B cell (primary cell): ENCODE measurements at regions of chr16 and their contacts with region 1.

Region 1: GRCh38 chr16:23640931-23641765 is at the starts of genes DCTN5 and PALB2:
- DNase-seq: peak; percentile 91
- ATAC-seq: peak; percentile 95
- H3K4me3 ChIP-seq: peak within 1 kb of the TSS; percentile 89 to 100 (median 96)
- H3K4me3 Mint-ChIP-seq: peak within 1 kb of the TSS; percentile 99
- H3K27ac ChIP-seq: peak within 1 kb of the TSS; percentile 80 to 84
- H3K27ac Mint-ChIP-seq: peak within 1 kb of the TSS; percentile 98
- H3K4me1 ChIP-seq: peaks cover 13 to 20% of the 10 kb centered on the region in 2 donors
- H3K4me1 Mint-ChIP-seq: peaks cover 36% of the 10 kb centered on the region
- H3K27me3 ChIP-seq: no peaks in the 10 kb centered on the region
- H3K27me3 Mint-ChIP-seq: no peaks in the 10 kb centered on the region
- CTCF ChIP-seq: no peak
- total RNA-seq, gene DCTN5: 58.3 and 62.3 TPM in 2 replicates
- total RNA-seq, gene PALB2: 14.9 and 16.3 TPM in 2 replicates

Region 2: DNA sequence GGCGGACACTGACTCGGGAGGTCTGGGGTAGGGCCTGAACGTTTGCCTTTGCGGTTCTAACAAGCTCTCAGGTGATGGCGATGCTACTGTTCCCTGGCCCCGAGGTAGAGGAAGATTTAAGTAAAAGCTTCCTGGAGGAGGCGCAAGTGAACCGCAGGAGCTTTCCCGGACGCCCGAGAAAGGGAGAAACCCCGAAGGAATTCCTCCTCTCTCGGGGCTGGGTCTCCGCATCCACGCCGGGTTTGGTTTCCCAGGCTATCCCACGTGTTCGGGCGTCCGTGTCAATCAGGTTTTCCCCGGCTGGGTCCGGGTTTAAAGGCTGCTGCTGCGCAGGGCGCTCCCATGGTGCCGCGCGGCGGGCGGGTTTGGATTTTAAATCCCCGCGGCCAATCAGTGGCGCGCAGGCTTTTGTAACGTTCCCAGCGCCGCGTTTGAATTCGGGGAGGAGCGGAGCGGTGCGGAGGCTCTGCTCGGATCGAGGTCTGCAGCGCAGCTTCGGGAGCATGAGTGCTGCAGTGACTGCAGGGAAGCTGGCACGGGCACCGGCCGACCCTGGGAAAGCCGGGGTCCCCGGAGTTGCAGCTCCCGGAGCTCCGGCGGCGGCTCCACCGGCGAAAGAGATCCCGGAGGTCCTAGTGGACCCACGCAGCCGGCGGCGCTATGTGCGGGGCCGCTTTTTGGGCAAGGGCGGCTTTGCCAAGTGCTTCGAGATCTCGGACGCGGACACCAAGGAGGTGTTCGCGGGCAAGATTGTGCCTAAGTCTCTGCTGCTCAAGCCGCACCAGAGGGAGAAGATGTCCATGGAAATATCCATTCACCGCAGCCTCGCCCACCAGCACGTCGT is 37.5 kb after region 1 on chr16 and contains the start of gene PLK1:
- CTCF ChIA-PET with region 1: interaction called, 3 read pairs
- POLR2A ChIA-PET with region 1: no interaction called
- intact Hi-C with region 1: loop called (anchors 1 kb)
- DNase-seq: peak; percentile 66
- ATAC-seq: peak; percentile 87
- H3K4me3 ChIP-seq: peak within 1 kb of the TSS; percentile 56 to 73 (median 64)
- H3K4me3 Mint-ChIP-seq: peak within 1 kb of the TSS; percentile 90
- H3K27ac ChIP-seq: no peak within 1 kb of the TSS
- H3K27ac Mint-ChIP-seq: no peak within 1 kb of the TSS
- H3K4me1 ChIP-seq: peaks cover 12 to 15% of the 10 kb centered on the region in 2 donors
- H3K4me1 Mint-ChIP-seq: peaks cover 17% of the 10 kb centered on the region
- H3K27me3 ChIP-seq: peaks cover 0 to 13% (median 3%) of the 10 kb centered on the region in 4 experiments
- H3K27me3 Mint-ChIP-seq: no peaks in the 10 kb centered on the region
- CTCF ChIP-seq: peak; percentile 15
- total RNA-seq, gene PLK1: 2.7 and 3.0 TPM in 2 replicates

Region 3: GRCh38 chr16:23754594-23755483 is 113.7 kb after region 1 on chr16 and contains the start of gene CHP2:
- CTCF ChIA-PET with region 1: no interaction called
- POLR2A ChIA-PET with region 1: no interaction called
- intact Hi-C with region 1: no loop called
- DNase-seq: peak; percentile 16
- ATAC-seq: no peak
- H3K4me3 ChIP-seq: peak within 1 kb of the TSS in 3 of 5 experiments; percentile 32 to 57 (median 35)
- H3K4me3 Mint-ChIP-seq: peak within 1 kb of the TSS; percentile 34
- H3K27ac ChIP-seq: no peak within 1 kb of the TSS
- H3K27ac Mint-ChIP-seq: no peak within 1 kb of the TSS
- H3K4me1 ChIP-seq: peaks cover 12 to 16% of the 10 kb centered on the region in 2 donors
- H3K4me1 Mint-ChIP-seq: peaks cover 3% of the 10 kb centered on the region
- H3K27me3 ChIP-seq: peaks cover 0 to 57% (median 26%) of the 10 kb centered on the region in 4 experiments
- H3K27me3 Mint-ChIP-seq: peaks cover 61% of the 10 kb centered on the region
- CTCF ChIP-seq: no peak
- total RNA-seq, gene CHP2: not detected in 2 replicates